Activated CD8-positive, alpha-beta T cell treated with anti-CD3 and anti-CD28 coated beads, Interleukin-2, amount 10 ng/mL, durations not matched to agents 7 days and 5 days (primary cell): ENCODE measurements at regions of chr22 and their contacts with region 1.

Region 1: GRCh38 chr22:40024201-40025061 is 29.7 kb downstream of the FAM83F start:
- DNase-seq: peak; percentile 74
- ATAC-seq: peak; percentile 84
- H3K4me3 Mint-ChIP-seq: no peak overlapping the region
- H3K27ac Mint-ChIP-seq: no peak overlapping the region
- H3K4me1 Mint-ChIP-seq: peaks cover 6% of the 10 kb centered on the region
- H3K27me3 Mint-ChIP-seq: no peaks in the 10 kb centered on the region

Region 2: GRCh38 chr22:39490135-39490798 is 534.2 kb before region 1 on chr22:
- CTCF ChIA-PET with region 1: interaction called, 10 read pairs
- POLR2A ChIA-PET with region 1: no interaction called
- DNase-seq: peak; percentile 89
- ATAC-seq: peak; percentile 99
- H3K4me3 Mint-ChIP-seq: peak overlapping the region; percentile 37
- H3K27ac Mint-ChIP-seq: peak overlapping the region; percentile 33
- H3K4me1 Mint-ChIP-seq: peaks cover 39% of the 10 kb centered on the region
- H3K27me3 Mint-ChIP-seq: no peaks in the 10 kb centered on the region

Region 3: DNA sequence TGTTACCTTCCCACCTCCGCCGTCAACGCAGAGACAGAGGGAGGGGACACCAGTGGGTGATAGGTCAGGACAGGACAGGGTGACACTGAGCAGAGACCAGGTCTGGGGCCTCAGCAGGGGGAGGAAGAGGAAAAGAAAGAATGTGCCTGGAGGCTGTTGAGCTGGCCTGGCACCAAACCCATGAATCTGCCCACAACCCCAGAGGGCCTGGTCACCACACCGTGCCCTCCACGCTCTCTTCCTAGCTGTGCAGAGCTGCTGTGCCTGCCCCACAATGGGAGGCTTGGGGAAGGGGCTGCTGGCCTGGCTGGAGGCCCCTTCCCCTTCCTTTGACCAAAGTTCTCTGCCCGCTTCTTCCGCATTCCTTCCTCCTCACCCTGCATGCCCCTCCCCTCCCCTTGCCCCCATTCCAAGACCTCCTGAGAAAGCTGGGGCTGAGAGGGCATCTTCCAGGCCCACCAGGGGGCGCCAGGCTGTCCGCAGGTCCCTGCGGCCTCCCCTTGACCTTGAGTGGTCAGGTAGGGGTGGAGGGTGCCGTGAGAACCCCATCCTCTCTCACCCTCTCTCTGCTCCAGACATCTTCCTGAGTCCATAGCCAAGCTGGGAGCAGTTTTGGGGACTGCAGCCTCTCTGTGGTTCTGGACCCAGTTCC is 464.9 kb before region 1 on chr22:
- CTCF ChIA-PET with region 1: interaction called, 14 read pairs
- POLR2A ChIA-PET with region 1: no interaction called
- DNase-seq: no peak
- ATAC-seq: no peak
- H3K4me3 Mint-ChIP-seq: no peak overlapping the region
- H3K27ac Mint-ChIP-seq: no peak overlapping the region
- H3K4me1 Mint-ChIP-seq: peaks cover 3% of the 10 kb centered on the region
- H3K27me3 Mint-ChIP-seq: peaks cover 39% of the 10 kb centered on the region

Region 4: DNA sequence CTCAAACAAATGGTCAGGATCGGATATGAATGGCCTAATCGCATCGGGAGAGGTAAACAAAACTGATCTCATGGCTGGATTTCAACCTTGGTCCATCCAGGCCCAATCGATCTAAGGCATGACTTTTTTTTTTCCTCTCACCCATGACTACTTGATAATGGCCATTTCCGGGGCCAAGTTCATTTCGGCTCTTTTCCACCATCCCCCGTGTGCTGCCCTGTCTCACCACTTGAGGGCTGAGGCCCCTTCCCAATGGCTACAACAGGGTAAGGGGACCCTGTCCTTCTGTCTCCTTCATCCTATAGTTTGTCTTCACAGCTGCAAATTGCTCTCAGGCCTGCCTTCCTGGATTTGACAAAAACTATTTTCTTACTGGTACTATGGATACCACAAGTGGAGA is 96.9 kb before region 1 on chr22:
- CTCF ChIA-PET with region 1: interaction called, 22 read pairs
- POLR2A ChIA-PET with region 1: no interaction called
- DNase-seq: peak; percentile 65
- ATAC-seq: peak; percentile 31
- H3K4me3 Mint-ChIP-seq: no peak overlapping the region
- H3K27ac Mint-ChIP-seq: no peak overlapping the region
- H3K4me1 Mint-ChIP-seq: peaks cover 34% of the 10 kb centered on the region
- H3K27me3 Mint-ChIP-seq: no peaks in the 10 kb centered on the region

Region 5: GRCh38 chr22:39946503-39947219 is 77.8 kb before region 1 on chr22:
- CTCF ChIA-PET with region 1: interaction called, 15 read pairs
- POLR2A ChIA-PET with region 1: interaction called, 5 read pairs
- DNase-seq: no peak
- ATAC-seq: no peak
- H3K4me3 Mint-ChIP-seq: no peak overlapping the region
- H3K27ac Mint-ChIP-seq: peak overlapping the region; percentile 58
- H3K4me1 Mint-ChIP-seq: peaks cover 98% of the 10 kb centered on the region
- H3K27me3 Mint-ChIP-seq: no peaks in the 10 kb centered on the region

Region 6: DNA sequence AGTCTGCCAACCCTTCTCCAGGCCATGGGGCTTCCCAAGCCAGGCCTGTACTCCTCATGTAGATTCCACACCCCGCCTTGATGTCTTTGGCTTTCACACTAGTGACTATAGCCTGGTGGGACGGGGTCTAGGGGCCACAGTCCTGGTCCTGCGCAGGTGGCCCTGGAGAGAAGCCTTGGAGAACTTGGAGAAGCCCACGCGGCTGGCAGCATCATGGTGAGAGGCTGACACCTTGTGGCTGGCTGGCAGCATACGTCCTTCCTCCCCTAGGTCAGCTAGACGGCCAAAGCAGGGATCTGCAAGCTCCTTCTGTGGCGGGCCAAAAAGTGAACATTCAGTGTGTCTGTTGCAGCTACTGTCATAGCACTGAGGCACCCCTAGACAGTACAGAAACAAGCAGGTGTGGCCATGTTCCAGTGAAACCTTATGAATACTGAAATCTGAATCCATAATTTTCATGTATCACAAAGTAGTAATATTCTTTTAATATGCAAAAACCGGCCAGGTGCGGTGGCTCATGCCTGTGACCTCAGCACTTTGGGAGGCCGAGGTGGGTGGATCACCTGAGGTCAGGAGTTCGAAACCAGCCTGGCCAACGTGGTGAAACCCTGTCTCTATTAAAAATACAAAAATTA is 12.3 kb after region 1 on chr22:
- CTCF ChIA-PET with region 1: interaction called, 29 read pairs
- POLR2A ChIA-PET with region 1: no interaction called
- DNase-seq: peak; percentile 73
- ATAC-seq: peak; percentile 76
- H3K4me3 Mint-ChIP-seq: no peak overlapping the region
- H3K27ac Mint-ChIP-seq: no peak overlapping the region
- H3K4me1 Mint-ChIP-seq: peaks cover 31% of the 10 kb centered on the region
- H3K27me3 Mint-ChIP-seq: peaks cover 8% of the 10 kb centered on the region